CD8-positive, alpha-beta T cell (primary cell): ENCODE measurements at regions of chr2 and their contacts with region 1.

Region 1: DNA sequence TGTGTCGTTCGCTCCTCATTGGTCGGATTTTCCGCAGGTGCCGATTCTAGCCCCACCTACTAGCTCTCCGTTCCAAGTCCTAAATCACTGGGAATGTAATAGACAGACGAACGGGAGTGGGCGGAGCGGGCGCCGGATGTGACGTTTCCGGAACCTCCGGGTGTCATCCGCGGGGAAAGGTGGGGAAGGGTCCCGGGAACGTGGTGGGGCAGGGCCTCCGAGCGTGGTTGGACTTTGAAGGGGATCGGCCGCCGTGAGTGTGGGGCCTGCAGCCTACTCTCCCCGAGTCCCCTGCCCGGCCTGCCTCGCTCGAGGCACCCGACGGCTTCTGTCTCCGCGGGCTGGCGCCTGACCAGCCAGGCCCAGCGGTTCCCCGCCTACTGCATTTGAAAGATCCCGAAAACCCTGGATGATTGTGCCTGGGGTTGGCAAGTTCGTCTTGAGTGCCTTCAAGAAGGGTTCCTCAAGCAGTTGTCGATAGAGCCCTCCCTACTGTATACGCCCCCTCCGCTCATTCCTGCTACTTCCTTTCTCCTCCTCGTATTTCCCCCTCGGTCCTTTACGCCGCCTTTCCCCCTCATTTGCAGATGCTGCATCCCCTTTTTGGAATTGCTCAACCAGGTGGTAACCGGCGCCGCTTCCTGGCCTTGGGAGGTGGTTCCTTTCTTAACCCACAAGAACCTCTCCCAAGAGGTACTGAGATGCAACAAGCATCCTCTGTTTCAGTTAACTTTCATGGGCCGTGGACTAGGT is at the start of gene STAMBP:
- DNase-seq: peak; percentile 68 to 97 (median 91)
- ATAC-seq: peak; percentile 83
- H3K4me3 ChIP-seq: peak within 1 kb of the TSS; percentile 73 to 78
- H3K4me3 Mint-ChIP-seq: peak within 1 kb of the TSS; percentile 97
- H3K27ac ChIP-seq: peak within 1 kb of the TSS; percentile 74 to 96
- H3K27ac Mint-ChIP-seq: peak within 1 kb of the TSS; percentile 99
- H3K4me1 ChIP-seq: peaks cover 33% of the 10 kb centered on the region
- H3K4me1 Mint-ChIP-seq: peaks cover 53% of the 10 kb centered on the region
- H3K27me3 ChIP-seq: no peaks in the 10 kb centered on the region
- H3K27me3 Mint-ChIP-seq: no peaks in the 10 kb centered on the region
- CTCF ChIP-seq: no peak
- total RNA-seq, gene STAMBP: 8.6 to 9.2 TPM

Region 2: DNA sequence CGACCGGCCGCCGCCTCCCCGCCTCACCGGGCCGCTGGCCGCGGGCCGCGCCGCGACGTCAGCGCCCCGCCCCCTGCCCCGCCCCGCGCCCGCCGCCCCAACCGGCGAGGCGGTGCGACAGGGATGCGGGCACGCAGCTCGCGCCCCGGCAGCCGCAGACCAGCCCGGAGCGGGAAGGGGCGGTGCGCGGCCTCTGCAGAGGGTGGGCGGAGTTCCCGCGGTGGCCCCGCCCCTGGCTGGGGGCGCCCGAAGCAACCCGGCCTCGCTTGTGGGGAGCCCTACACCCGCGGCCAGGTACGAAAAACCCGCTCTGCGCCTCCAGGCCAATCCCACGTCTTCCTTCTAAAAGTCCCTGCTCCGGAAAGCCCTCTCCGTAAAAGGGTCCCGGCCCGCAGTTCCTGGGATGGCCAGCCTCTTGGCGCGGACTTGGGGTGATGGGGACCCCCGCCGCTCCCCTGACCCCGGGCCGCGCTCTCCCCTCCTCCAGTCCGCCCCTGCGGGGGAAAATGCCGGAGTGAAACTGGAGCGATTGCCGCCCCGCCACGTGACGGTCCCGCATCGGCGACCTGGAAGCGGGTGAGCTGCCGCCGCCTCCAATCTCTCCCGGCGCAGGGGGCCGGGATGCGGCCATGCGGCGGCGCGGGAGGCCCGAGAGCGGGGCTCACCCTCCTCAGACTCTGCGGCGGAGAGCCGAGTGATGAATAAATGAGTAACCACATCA is 715.9 kb before region 1 on chr2 and contains the start of gene RAB11FIP5:
- CTCF ChIA-PET with region 1: no interaction called
- POLR2A ChIA-PET with region 1: no interaction called
- intact Hi-C with region 1: no loop called
- DNase-seq: peak; percentile 43 to 90 (median 73)
- ATAC-seq: peak; percentile 90
- H3K4me3 ChIP-seq: peak within 1 kb of the TSS; percentile 68 to 70
- H3K4me3 Mint-ChIP-seq: peak within 1 kb of the TSS; percentile 82
- H3K27ac ChIP-seq: peak within 1 kb of the TSS; percentile 32 to 37
- H3K27ac Mint-ChIP-seq: no peak within 1 kb of the TSS
- H3K4me1 ChIP-seq: peaks cover 15% of the 10 kb centered on the region
- H3K4me1 Mint-ChIP-seq: peaks cover 18% of the 10 kb centered on the region
- H3K27me3 ChIP-seq: peaks cover 0 to 3% of the 10 kb centered on the region in 2 experiments
- H3K27me3 Mint-ChIP-seq: no peaks in the 10 kb centered on the region
- CTCF ChIP-seq: no peak
- total RNA-seq, gene RAB11FIP5: 4.7 to 10.7 TPM

Region 3: DNA sequence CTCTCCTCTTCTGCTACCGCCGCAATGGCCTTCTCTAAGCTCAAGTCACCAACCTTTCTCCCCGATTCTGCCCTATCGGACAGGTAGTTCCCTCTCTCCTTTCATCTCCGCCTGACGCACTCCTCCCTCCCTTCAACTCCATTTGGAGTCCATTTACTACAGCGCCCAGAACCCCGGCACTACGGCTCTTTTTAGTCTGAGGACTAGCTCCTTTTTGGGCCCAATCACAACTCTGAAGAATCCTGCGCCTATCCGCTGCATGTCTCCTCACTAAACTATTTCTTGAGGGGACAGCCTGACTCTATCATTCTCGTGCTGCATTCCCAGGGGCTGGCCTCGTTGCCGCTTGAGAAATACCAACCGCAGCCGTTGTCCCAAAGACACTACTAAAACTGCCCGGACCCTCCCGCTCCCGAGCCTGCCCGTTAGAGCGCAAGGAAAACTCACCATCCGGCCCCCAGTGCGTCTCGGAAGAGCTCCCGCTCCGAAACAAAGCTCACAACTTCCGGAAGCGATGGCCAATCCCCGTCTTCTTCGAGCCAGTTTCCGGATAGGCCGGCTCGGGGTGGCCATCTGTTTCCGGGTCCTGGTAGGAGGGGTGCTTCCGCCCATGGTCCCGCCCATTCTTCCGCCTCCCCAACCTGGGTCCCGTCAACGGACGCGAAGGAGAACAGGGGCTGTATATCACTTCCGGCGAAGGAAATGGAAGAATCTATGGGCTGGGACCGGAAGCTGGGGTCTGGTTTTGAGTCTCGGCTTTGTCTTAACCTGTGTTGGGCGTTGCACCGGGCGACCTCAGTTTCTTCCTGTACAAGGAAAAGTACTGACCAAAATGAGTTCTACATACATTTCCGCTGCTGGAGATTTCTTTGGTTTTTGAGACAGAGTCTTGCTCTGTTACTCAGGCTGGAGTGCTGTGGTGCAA is 91.9 kb before region 1 on chr2 and contains the start of gene TPRKB:
- CTCF ChIA-PET with region 1: interaction called, 3 read pairs
- POLR2A ChIA-PET with region 1: interaction called, 4 read pairs
- intact Hi-C with region 1: loop called in 1 of 2 experiments (anchors 1 kb)
- DNase-seq: peak; percentile 86 to 98 (median 95)
- ATAC-seq: peak; percentile 95
- H3K4me3 ChIP-seq: peak within 1 kb of the TSS; percentile 57 to 89
- H3K4me3 Mint-ChIP-seq: peak within 1 kb of the TSS; percentile 98
- H3K27ac ChIP-seq: peak within 1 kb of the TSS; percentile 44 to 77
- H3K27ac Mint-ChIP-seq: peak within 1 kb of the TSS; percentile 96
- H3K4me1 ChIP-seq: peaks cover 18% of the 10 kb centered on the region
- H3K4me1 Mint-ChIP-seq: peaks cover 23% of the 10 kb centered on the region
- H3K27me3 ChIP-seq: no peaks in the 10 kb centered on the region
- H3K27me3 Mint-ChIP-seq: no peaks in the 10 kb centered on the region
- CTCF ChIP-seq: no peak
- total RNA-seq, gene TPRKB: 19.8 to 21.7 TPM

Region 4: GRCh38 chr2:73907840-73908452 is 79.0 kb after region 1 on chr2:
- CTCF ChIA-PET with region 1: interaction called, 4 read pairs
- POLR2A ChIA-PET with region 1: no interaction called
- intact Hi-C with region 1: loop called in 1 of 2 experiments (anchors 1 kb)
- DNase-seq: peak; percentile 19 to 79 (median 61)
- ATAC-seq: peak; percentile 90
- H3K4me3 ChIP-seq: no peak overlapping the region
- H3K4me3 Mint-ChIP-seq: no peak overlapping the region
- H3K27ac ChIP-seq: no peak overlapping the region
- H3K27ac Mint-ChIP-seq: peak overlapping the region; percentile 7
- H3K4me1 ChIP-seq: no peaks in the 10 kb centered on the region
- H3K4me1 Mint-ChIP-seq: peaks cover 3% of the 10 kb centered on the region
- H3K27me3 ChIP-seq: no peaks in the 10 kb centered on the region
- H3K27me3 Mint-ChIP-seq: no peaks in the 10 kb centered on the region
- CTCF ChIP-seq: peak; percentile 44

Region 5: DNA sequence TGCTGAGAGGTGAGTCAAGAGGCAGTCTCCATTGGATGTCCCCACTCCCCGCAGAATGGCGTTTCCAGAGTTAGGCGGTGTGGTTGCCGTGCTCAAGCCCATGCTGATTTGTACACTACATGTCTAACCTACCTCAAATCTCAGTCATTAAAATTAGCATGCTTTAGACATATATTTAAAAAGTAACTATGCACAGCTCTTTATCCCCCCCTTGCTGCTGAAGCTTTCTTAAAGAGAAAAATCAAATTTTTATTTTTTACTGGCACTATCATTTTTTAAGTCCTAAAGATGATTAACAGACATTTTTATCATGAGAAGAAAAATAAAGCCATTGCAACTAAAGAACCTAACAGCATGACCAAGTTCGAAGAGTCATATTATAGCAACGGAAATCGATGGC is 275.8 kb after region 1 on chr2:
- CTCF ChIA-PET with region 1: interaction called, 23 read pairs
- POLR2A ChIA-PET with region 1: no interaction called
- intact Hi-C with region 1: loop called in 1 of 2 experiments (anchors 1 kb)
- DNase-seq: peak in 1 of 9 experiments; percentile 30
- ATAC-seq: peak; percentile 40
- H3K4me3 ChIP-seq: no peak overlapping the region
- H3K4me3 Mint-ChIP-seq: no peak overlapping the region
- H3K27ac ChIP-seq: no peak overlapping the region
- H3K27ac Mint-ChIP-seq: no peak overlapping the region
- H3K4me1 ChIP-seq: no peaks in the 10 kb centered on the region
- H3K4me1 Mint-ChIP-seq: no peaks in the 10 kb centered on the region
- H3K27me3 ChIP-seq: no peaks in the 10 kb centered on the region
- H3K27me3 Mint-ChIP-seq: no peaks in the 10 kb centered on the region
- CTCF ChIP-seq: peak; percentile 26

Region 6: DNA sequence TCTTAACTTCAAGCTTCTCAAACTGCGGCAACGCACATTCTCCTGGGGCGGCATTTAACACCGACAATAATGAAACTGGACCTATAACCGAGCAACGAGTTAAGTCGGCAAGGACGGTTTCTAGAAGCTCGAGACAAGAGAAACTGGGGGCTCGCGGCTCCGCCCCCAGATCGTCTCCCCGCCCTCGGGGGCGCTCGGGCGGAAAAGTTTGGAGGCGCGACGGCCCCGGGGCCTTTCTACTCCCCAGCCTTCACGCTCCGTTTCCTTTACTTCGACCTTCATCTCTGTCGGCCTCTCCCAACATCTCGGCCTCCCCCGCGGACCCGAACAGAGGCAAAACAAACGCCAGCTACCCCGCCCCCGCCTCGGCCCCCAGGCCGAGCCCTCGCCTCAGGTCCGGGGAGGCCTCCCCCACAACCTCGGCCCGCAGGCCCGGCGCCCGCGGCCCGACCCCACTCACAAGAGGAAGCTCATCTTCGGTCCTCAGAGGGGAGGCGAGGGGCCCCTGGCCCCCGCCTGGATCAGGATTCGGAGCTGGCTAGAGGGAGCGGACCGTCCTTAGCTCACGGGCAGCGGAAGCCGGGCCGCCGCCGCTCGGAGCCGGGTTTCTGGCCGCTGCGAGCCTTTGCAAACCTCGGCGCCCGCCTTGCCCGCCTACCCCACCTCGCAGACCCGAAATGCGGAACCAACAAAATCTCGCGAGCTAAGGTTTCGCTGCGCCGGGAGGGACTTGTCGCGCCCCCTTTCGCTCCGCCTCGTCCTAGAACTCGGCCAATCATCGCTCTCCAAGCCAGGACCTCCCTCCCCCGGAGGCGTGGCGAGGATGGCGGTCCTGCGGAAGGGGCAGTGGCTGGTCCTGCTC is 349.4 kb after region 1 on chr2 and contains the start of gene MOB1A:
- CTCF ChIA-PET with region 1: interaction called, 9 read pairs
- POLR2A ChIA-PET with region 1: interaction called, 3 read pairs
- intact Hi-C with region 1: loop called in 1 of 2 experiments (anchors 1 kb)
- DNase-seq: peak; percentile 96 to 99 (median 98)
- ATAC-seq: peak; percentile 95
- H3K4me3 ChIP-seq: peak within 1 kb of the TSS; percentile 79 to 93
- H3K4me3 Mint-ChIP-seq: peak within 1 kb of the TSS; percentile 92
- H3K27ac ChIP-seq: peak within 1 kb of the TSS; percentile 95
- H3K27ac Mint-ChIP-seq: peak within 1 kb of the TSS; percentile 92
- H3K4me1 ChIP-seq: peaks cover 40% of the 10 kb centered on the region
- H3K4me1 Mint-ChIP-seq: peaks cover 36% of the 10 kb centered on the region
- H3K27me3 ChIP-seq: no peaks in the 10 kb centered on the region
- H3K27me3 Mint-ChIP-seq: no peaks in the 10 kb centered on the region
- CTCF ChIP-seq: no peak
- total RNA-seq, gene MOB1A: 181 to 197 TPM

Region 7: GRCh38 chr2:74458132-74458925 is 629.3 kb after region 1 on chr2 and contains the start of gene WBP1:
- CTCF ChIA-PET with region 1: no interaction called
- POLR2A ChIA-PET with region 1: interaction called, 4 read pairs
- intact Hi-C with region 1: loop called in 1 of 2 experiments (anchors 1 kb)
- DNase-seq: peak; percentile 96 to 100 (median 98)
- ATAC-seq: peak; percentile 77
- H3K4me3 ChIP-seq: peak within 1 kb of the TSS; percentile 84 to 95
- H3K4me3 Mint-ChIP-seq: peak within 1 kb of the TSS; percentile 97
- H3K27ac ChIP-seq: peak within 1 kb of the TSS; percentile 93 to 100
- H3K27ac Mint-ChIP-seq: peak within 1 kb of the TSS; percentile 99
- H3K4me1 ChIP-seq: peaks cover 34% of the 10 kb centered on the region
- H3K4me1 Mint-ChIP-seq: peaks cover 57% of the 10 kb centered on the region
- H3K27me3 ChIP-seq: no peaks in the 10 kb centered on the region
- H3K27me3 Mint-ChIP-seq: no peaks in the 10 kb centered on the region
- CTCF ChIP-seq: no peak
- total RNA-seq, gene WBP1: 68.5 to 70.6 TPM